ENCODE measurements at regions of chr1 and their contacts with region 1.

Region 1: DNA sequence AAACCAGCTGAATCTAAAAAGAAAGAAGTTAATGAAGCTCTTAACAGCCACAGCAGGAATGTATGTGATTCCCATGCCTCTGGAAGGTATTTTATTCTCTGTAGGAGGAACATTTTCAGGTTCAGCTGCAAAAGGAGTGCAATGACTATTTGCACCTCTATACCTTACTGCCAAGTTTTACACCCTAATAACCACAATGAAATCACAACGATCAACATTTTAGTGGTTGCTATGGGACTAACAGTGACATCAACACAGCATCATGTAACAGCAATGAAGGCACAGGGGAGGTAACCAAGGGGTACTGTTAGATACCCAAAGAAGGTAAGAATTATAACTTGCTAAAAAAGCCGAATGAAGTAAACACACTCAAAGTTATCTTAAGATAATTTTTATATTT is 116.3 kb upstream of the HP1BP3 start:
- DNase-seq: peak; percentile 16
- ATAC-seq: no peak
- H3K4me3 ChIP-seq: no peak overlapping the region
- H3K27ac ChIP-seq: peak overlapping the region; percentile 25; the same call in 1 of the 2 replicates
- H3K4me1 ChIP-seq: no peaks in the 10 kb centered on the region
- H3K27me3 ChIP-seq: no peaks in the 10 kb centered on the region
- CTCF ChIP-seq: no peak

Region 2: DNA sequence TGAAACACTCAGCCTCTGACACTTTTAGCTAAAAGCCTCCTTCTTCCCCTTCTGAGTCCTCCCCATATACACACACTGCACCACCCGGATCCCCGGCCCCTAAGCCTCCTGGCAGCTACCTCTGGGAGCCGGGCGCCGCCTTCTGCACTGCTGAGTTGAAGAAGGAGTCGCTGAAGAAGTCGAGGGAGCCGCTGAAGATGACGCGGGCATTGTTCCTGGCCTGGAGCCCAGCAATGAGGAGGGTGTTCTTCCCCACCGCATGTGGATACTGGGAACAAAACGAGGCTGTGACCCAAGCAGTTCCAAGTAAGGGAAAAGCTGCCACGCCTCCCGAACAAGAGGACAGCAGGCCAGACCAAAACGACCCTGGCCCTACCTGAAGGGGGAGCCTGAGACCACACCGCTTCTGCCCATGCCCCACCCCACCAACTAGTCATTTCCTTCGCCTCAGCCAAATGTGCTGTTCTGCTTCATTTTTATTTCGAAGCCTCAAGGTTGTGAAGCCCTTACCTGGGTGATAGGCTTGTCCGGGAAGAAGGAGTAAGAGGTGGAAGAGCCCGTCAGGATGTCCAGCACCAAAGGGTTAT is 249.2 kb before region 1 on chr1:
- CTCF ChIA-PET with region 1: no interaction called
- POLR2A ChIA-PET with region 1: interaction called, 11 read pairs
- intact Hi-C with region 1: no loop called
- DNase-seq: no peak
- ATAC-seq: no peak; the same call in 1 of the 2 replicates
- H3K4me3 ChIP-seq: no peak overlapping the region
- H3K27ac ChIP-seq: no peak overlapping the region
- H3K4me1 ChIP-seq: no peaks in the 10 kb centered on the region
- H3K27me3 ChIP-seq: no peaks in the 10 kb centered on the region
- CTCF ChIP-seq: no peak

Region 3: GRCh38 chr1:20840731-20841130 is 62.7 kb before region 1 on chr1:
- CTCF ChIA-PET with region 1: no interaction called
- POLR2A ChIA-PET with region 1: no interaction called
- intact Hi-C with region 1: no loop called
- DNase-seq: no peak
- ATAC-seq: no peak
- H3K4me3 ChIP-seq: no peak overlapping the region
- H3K27ac ChIP-seq: no peak overlapping the region
- H3K4me1 ChIP-seq: no peaks in the 10 kb centered on the region
- H3K27me3 ChIP-seq: no peaks in the 10 kb centered on the region
- CTCF ChIP-seq: no peak